GM10248 (cell line): ENCODE measurements at regions of chr16 and their contacts with region 1.

Region 1: DNA sequence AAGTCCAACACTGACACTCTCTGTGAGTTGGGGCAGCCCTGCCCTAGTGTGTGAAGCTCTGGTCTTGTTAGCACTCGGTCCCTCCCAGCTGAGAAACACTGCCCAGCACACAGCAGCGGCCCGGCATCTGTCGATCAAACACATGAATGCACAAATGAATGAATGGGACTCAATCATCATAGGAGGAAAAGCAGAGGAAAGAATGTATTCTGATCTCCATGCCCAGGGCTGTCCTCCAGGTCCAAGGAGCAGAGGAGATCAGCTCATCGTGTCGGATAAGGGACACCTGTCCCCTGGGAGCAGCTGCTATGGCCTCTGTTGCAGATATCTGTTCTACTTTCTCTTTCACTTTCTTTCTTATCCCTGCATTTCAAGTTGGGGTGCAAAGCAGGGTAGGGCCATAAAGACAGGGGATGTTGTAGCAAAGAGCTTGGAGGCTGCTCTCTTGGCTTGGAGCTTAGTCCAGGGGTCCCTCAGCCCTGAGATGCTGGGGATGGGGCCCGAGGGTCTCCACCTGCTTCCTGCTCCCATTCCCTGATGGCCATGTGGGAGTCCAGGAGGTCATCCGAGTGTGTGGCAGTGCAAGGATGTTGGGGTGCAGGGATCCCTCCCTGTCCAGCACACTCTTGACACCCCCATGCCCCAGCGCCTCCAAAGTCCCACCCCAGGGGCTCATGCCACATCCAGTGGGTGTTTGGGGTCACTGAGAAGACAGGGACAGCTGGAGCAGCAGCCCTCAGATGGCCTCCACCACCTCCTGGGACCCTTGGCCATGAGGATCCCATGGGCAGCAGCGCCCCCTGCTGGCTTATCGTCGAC is 88.2 kb downstream of the IRF8 start:
- DNase-seq: peak; percentile 80
- CTCF ChIP-seq: peak; percentile 22

Region 2: GRCh38 chr16:85393674-85394483 is 593.3 kb before region 1 on chr16:
- CTCF ChIA-PET with region 1: no interaction called
- POLR2A ChIA-PET with region 1: no interaction called
- DNase-seq: peak; percentile 88
- CTCF ChIP-seq: peak; percentile 81

Region 3: GRCh38 chr16:85908444-85908843 is 78.7 kb before region 1 on chr16:
- CTCF ChIA-PET with region 1: interaction called, 16 read pairs
- POLR2A ChIA-PET with region 1: interaction called, 4 read pairs
- DNase-seq: peak; percentile 70
- CTCF ChIP-seq: no peak

Region 4: GRCh38 chr16:85947230-85948137 is 39.7 kb before region 1 on chr16:
- CTCF ChIA-PET with region 1: interaction called, 10 read pairs
- POLR2A ChIA-PET with region 1: no interaction called
- DNase-seq: peak; percentile 85
- CTCF ChIP-seq: no peak

Region 5: GRCh38 chr16:86002178-86002900 is 15.2 kb after region 1 on chr16:
- CTCF ChIA-PET with region 1: interaction called, 45 read pairs
- POLR2A ChIA-PET with region 1: no interaction called
- DNase-seq: no peak
- CTCF ChIP-seq: no peak

Region 6: DNA sequence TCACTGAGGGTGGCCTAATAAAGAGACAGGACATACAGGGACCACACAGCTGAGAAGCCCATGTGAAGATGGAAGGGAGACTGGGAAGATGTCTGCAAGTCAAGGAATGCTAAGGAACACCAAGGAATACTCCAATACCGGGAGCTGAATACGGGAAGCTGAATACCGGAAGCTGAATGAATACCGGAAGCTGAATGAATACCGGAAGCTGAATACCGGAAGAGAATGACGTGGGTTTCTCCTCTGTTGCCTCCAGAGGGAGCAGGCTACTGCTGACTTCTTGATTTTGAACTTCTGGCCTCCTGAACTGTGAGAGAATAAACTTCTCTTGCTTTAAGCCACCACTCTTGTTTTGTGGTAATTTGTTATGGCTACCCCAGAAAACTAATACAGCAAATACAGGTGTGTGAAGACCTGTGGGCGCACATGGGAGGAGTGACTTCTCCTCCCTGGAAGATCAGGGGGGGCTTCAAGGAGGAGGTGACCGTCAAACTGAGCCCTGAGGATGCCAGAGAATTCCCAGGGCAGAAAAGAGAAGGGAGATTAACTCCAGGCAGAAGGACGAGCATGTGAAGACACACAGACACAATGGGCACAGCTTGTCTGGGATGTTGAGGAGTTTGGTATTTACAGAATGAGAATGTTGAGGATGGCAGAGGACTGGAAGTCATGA is 171.7 kb after region 1 on chr16:
- CTCF ChIA-PET with region 1: no interaction called
- POLR2A ChIA-PET with region 1: no interaction called
- DNase-seq: no peak
- CTCF ChIP-seq: no peak